Spleen (tissue), 13 donors: ENCODE measurements at regions of chr20 and their contacts with region 1.

Region 1: DNA sequence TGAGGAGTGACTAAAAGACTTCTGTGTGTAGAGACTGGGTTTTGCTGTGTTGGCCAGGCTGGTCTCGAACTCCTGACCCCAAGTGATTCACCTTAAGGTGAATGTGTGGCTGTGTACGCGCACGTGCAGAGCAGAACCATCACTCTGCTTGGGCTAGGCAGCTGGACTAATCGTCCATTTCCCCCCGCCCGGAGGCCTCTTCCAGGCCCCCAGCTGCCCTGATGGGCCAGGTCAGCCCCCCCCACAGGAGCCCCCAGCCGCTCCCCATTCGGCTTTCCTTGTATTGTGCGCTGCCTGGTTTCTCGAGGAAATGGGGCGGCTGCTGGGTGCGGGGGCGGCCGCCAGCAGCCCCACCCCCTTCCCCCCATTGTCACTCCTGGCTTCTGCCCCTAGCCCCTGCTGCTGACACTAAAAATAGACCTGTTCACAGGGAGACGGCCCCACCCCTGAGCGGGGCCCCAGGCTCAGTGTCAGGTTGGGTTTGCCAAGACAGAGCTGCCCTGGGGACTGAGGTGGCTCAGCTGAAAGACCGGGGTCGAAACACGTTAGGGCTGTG is 24.6 kb upstream of the CSNK2A1 start:
- DNase-seq: no peak
- H3K4me3 ChIP-seq: no peak overlapping the region
- H3K27ac ChIP-seq: no peak overlapping the region
- H3K4me1 ChIP-seq: peaks cover 0 to 9% (median 0%) of the 10 kb centered on the region in 6 donors
- H3K27me3 ChIP-seq: peaks cover 0 to 66% (median 24%) of the 10 kb centered on the region in 7 donors
- CTCF ChIP-seq: no peak
- POLR2A ChIP-seq: no peak

Region 2: GRCh38 chr20:266596-267562 is 301.3 kb before region 1 on chr20:
- intact Hi-C with region 1: no loop called
- DNase-seq: peak; percentile 96
- H3K4me3 ChIP-seq: peak overlapping the region in 7 of 8 donors; percentile 26 to 70 (median 42)
- H3K27ac ChIP-seq: peak overlapping the region in 2 of 8 donors; percentile 14 to 26
- H3K4me1 ChIP-seq: peaks cover 0 to 14% (median 9%) of the 10 kb centered on the region in 6 donors
- H3K27me3 ChIP-seq: peaks cover 0 to 5% (median 0%) of the 10 kb centered on the region in 7 donors
- CTCF ChIP-seq: peak; percentile 93 to 98 (median 97)
- POLR2A ChIP-seq: no peak

Region 3: DNA sequence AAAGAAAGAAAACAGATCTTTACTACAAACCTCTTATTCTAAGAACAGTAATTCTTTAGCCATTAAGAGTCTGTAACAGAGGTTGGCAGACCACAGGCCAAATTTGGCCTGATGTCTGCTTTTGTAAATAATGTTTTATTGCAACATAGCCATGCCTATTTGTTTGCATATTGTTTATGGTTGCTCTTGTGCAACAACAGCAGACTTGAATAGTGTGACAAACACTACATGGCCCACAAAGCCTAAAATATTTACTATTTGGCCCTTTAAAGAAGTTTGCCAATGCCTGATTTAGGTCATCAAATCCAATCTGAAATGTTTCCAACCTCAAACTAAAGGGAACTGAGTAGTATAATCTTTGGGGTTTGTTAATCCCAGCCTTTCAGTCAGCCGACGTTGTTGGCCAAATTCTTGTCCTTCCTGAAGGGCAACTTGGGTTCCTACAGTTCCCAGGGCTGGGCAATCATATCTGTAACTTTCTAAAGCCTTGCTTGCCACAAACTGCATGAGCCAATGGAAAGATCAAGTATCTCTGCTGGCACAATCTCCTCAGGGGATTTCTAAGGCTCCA is 72.0 kb before region 1 on chr20:
- intact Hi-C with region 1: no loop called
- DNase-seq: no peak
- H3K4me3 ChIP-seq: no peak overlapping the region
- H3K27ac ChIP-seq: no peak overlapping the region
- H3K4me1 ChIP-seq: no peaks in the 10 kb centered on the region
- H3K27me3 ChIP-seq: no peaks in the 10 kb centered on the region
- CTCF ChIP-seq: no peak
- POLR2A ChIP-seq: no peak

Region 4: DNA sequence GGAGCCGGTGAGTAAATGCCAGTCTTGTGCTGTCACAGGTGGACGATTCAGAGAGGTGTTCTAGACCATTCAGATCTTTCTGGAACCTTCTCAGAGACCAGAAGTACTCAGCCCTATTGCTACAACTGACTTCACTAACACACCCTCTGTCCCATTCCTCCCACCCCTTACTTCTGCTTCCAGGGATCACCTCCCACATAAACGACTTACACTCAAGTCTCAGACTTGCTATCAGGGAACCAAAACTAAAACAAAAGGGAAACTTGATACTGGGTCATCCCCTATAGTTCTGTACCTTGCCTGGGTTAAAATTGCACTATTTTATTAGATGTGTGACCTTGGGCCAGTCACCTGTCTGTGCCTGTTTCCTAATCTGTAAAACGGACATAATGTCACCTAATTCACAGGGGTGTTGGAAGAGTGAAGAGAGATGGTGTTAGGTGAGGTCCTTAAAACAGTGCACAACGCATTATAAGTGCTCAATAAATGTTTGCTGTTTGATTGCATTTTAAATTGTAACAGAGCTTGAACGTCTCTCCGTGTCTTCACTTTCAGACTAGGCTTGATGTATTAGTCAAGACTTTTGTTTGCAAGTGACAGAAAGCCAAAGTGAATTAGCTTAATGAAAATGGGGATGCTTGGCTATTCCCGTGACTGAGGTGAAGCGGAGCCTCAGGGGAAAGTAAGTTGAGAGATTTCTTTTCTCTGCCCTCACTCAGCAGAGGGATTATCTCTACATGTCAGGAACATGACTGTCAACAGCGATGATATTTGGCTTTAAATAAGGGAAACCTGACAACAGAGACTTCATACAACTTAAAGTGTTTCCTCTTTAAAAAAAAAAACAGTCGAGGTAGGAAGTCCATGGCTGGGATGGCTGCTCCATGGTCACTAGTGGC is 87.8 kb after region 1 on chr20:
- intact Hi-C with region 1: no loop called
- DNase-seq: no peak
- H3K4me3 ChIP-seq: no peak overlapping the region
- H3K27ac ChIP-seq: no peak overlapping the region
- H3K4me1 ChIP-seq: peaks cover 13 to 57% (median 30%) of the 10 kb centered on the region in 6 donors
- H3K27me3 ChIP-seq: peaks cover 0 to 52% (median 0%) of the 10 kb centered on the region in 7 donors
- CTCF ChIP-seq: no peak
- POLR2A ChIP-seq: no peak

Region 5: GRCh38 chr20:736897-737296 is 168.7 kb after region 1 on chr20:
- intact Hi-C with region 1: loop called (anchors 5 kb)
- DNase-seq: peak; percentile 24
- H3K4me3 ChIP-seq: no peak overlapping the region
- H3K27ac ChIP-seq: no peak overlapping the region
- H3K4me1 ChIP-seq: no peaks in the 10 kb centered on the region
- H3K27me3 ChIP-seq: peaks cover 0 to 45% (median 0%) of the 10 kb centered on the region in 7 donors
- CTCF ChIP-seq: no peak
- POLR2A ChIP-seq: no peak

Region 6: DNA sequence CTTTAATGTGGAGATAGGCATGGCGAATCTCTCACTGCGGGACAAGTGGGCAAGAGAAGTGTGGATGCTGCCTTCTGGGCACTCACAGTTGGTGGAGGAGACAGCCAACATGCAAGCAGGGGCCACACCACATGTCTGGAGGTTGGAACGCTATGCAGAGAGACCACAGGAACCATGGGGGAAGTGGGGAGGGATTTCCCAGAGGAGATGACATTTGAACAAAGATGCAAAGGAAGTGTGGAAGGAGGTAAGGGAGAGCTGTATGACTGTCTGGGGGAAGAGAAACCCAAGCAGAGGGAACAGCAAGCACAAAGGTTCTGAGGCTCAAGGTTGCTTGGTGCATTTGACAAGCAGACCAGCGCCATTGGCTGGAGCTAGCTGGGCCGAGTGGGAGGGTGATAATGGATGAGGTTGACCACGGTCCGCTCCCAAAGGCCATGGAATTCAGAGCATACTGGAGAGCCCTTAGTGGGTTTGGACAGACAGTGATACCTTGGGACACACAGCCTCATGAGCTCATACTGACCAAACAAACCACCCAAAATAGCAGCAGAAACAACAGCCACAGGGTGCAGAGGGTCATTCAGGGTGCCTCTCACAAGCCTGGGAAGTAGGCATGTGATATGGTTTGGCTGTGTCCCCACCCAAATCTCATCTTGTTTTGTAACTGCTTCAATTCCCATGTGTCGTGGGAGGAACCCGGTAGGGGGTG is 257.7 kb after region 1 on chr20:
- intact Hi-C with region 1: no loop called
- DNase-seq: peak; percentile 53
- H3K4me3 ChIP-seq: no peak overlapping the region
- H3K27ac ChIP-seq: no peak overlapping the region
- H3K4me1 ChIP-seq: peaks cover 0 to 13% (median 0%) of the 10 kb centered on the region in 6 donors
- H3K27me3 ChIP-seq: no peaks in the 10 kb centered on the region
- CTCF ChIP-seq: no peak
- POLR2A ChIP-seq: no peak